Calu3 (cell line): ENCODE measurements at regions of chr9 and their contacts with region 1.

Region 1: GRCh38 chr9:32526041-32526706 is at the start of gene RIGI:
- DNase-seq: peak; percentile 86
- H3K4me3 Mint-ChIP-seq: peak within 1 kb of the TSS; percentile 84
- H3K27ac Mint-ChIP-seq: peak within 1 kb of the TSS; percentile 67
- H3K4me1 Mint-ChIP-seq: peaks cover 23% of the 10 kb centered on the region
- H3K27me3 Mint-ChIP-seq: no peaks in the 10 kb centered on the region
- CTCF ChIP-seq: peak; percentile 38
- total RNA-seq, gene RIGI: 24.8 and 49.0 TPM in 2 replicates

Region 2: DNA sequence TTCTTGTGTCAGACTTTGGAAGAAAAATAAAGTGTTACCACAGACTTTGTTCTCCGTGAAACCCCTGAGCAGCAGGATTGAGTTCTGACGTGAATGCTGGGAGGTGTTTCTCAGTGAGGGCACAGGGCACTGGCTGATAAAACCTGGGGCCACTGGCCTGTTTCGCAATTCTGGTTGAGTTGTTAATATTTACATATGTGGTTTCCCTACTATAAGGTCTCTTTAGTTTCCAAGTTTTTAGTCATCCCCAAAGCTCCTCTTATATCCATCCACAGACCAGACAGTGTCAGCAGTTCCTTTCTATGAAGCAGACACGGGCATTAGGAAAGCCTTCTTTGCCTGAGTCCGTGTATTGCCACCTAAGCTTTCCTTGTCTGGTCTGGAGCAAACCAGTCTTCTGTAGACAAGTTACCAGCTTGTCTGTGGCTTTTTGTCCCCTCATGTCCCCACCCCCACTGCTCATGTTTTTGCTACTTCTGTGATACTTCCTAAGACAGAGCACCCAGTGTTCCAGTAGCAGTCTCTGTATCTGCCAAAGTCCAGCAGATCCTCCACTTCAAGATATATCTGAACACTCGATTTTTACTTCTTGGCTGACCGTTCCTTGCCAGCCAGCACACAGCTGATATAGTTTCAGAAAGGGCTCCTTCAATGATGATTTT is 99.8 kb before region 1 on chr9:
- CTCF ChIA-PET with region 1: interaction called, 7 read pairs
- intact Hi-C with region 1: loop called (anchors 10 kb)
- DNase-seq: peak; percentile 49
- H3K4me3 Mint-ChIP-seq: no peak overlapping the region
- H3K27ac Mint-ChIP-seq: peak overlapping the region; percentile 58
- H3K4me1 Mint-ChIP-seq: peaks cover 25% of the 10 kb centered on the region
- H3K27me3 Mint-ChIP-seq: no peaks in the 10 kb centered on the region
- CTCF ChIP-seq: no peak

Region 3: DNA sequence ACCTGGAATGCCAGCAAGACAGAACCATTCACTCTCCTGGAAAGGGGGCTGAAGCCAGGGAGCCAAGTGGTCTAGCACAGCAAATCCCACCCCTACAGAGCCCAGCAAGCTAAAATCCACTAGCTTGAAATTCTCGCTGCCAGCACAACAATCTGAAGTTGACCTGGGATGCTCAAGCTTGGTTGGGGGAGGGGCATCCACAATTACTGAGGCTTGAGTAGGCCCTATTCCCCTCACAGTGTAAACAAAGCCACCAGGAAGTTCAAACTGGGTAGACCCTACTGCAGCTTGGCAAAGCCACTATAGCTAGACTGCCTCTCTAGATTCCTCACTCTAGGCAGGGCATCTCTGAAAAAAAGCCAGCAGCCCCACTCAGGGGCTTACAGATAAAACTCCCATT is 17.4 kb before region 1 on chr9:
- CTCF ChIA-PET with region 1: interaction called, 10 read pairs
- intact Hi-C with region 1: no loop called
- DNase-seq: no peak
- H3K4me3 Mint-ChIP-seq: no peak overlapping the region
- H3K27ac Mint-ChIP-seq: no peak overlapping the region
- H3K4me1 Mint-ChIP-seq: peaks cover 26% of the 10 kb centered on the region
- H3K27me3 Mint-ChIP-seq: no peaks in the 10 kb centered on the region
- CTCF ChIP-seq: no peak

Region 4: DNA sequence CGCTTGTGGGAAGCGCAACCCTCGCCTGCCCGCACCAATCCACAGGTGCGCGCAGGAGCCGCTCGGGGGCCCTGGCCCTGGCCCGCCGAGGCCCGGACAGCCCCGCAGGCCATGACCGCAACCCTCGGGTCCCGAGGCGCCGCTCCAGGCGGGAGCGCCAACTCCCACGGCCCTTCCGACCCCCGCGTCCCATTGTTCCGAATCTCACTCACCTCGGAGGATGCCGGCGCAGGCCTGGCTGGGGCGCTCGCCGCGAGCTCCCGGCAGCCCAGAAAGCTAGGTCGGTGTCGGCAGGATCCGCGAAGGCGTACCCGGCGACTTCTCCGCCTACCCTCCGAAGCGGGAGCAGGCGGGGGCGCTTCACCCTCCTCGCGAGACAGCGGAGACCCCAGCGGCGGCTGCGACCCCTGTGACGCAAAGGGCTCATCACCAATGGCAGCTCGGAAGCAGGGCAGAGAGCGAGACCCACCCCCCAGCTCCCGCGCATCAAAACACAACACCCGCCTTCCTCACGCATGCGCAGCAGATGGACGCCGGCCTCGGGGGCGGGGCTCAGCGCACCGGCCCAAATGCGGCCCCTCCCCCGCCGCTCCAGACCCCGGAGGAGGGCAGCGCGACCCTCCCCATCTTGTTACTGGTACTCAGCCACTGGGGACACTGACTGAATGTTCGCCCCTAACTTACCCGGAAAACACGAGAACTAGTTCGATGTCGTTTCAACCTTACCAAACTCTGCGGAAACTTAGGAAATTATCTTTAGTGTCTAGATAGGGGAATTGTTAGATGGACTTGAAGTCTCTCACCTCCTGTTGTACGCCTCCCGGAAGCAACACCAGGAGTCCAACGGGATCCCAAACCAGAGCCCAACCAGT is 24.6 kb after region 1 on chr9:
- CTCF ChIA-PET with region 1: interaction called, 11 read pairs
- intact Hi-C with region 1: no loop called
- DNase-seq: peak; percentile 87
- H3K4me3 Mint-ChIP-seq: peak overlapping the region; percentile 91
- H3K27ac Mint-ChIP-seq: peak overlapping the region; percentile 94
- H3K4me1 Mint-ChIP-seq: peaks cover 8% of the 10 kb centered on the region
- H3K27me3 Mint-ChIP-seq: no peaks in the 10 kb centered on the region
- CTCF ChIP-seq: no peak

Region 5: GRCh38 chr9:32571969-32572899 is 46.1 kb after region 1 on chr9:
- CTCF ChIA-PET with region 1: interaction called, 4 read pairs
- intact Hi-C with region 1: loop called (anchors 1 kb)
- DNase-seq: peak; percentile 57
- H3K4me3 Mint-ChIP-seq: peak overlapping the region; percentile 95
- H3K27ac Mint-ChIP-seq: peak overlapping the region; percentile 90
- H3K4me1 Mint-ChIP-seq: no peaks in the 10 kb centered on the region
- H3K27me3 Mint-ChIP-seq: no peaks in the 10 kb centered on the region
- CTCF ChIP-seq: no peak

Region 6: GRCh38 chr9:32603914-32604741 is 78.0 kb after region 1 on chr9:
- CTCF ChIA-PET with region 1: no interaction called
- intact Hi-C with region 1: no loop called
- DNase-seq: peak; percentile 67
- H3K4me3 Mint-ChIP-seq: no peak overlapping the region
- H3K27ac Mint-ChIP-seq: no peak overlapping the region
- H3K4me1 Mint-ChIP-seq: no peaks in the 10 kb centered on the region
- H3K27me3 Mint-ChIP-seq: no peaks in the 10 kb centered on the region
- CTCF ChIP-seq: no peak